ENCODE measurements at regions of chr17 and their contacts with region 1.

Region 1: GRCh38 chr17:40622509-40622928 is 25.1 kb downstream of the SMARCE1 start:
- DNase-seq: no peak
- ATAC-seq: peak; percentile 77
- H3K4me3 Mint-ChIP-seq: peak overlapping the region; percentile 58
- H3K27ac Mint-ChIP-seq: peak overlapping the region; percentile 72
- H3K4me1 Mint-ChIP-seq: peaks cover 47% of the 10 kb centered on the region
- H3K27me3 Mint-ChIP-seq: no peaks in the 10 kb centered on the region

Region 2: GRCh38 chr17:40564883-40565768 is 57.4 kb before region 1 on chr17 and contains the start of gene CCR7:
- POLR2A ChIA-PET with region 1: interaction called, 205 read pairs
- DNase-seq: peak; percentile 84
- ATAC-seq: peak; percentile 44
- H3K4me3 Mint-ChIP-seq: peak within 1 kb of the TSS; percentile 97
- H3K27ac Mint-ChIP-seq: peak within 1 kb of the TSS; percentile 99
- H3K4me1 Mint-ChIP-seq: peaks cover 23% of the 10 kb centered on the region
- H3K27me3 Mint-ChIP-seq: no peaks in the 10 kb centered on the region
- total RNA-seq, gene CCR7: 231 to 238 TPM